Posterior vena cava (tissue), 2 donors: ENCODE measurements at regions of chr17 and their contacts with region 1.

Region 1: DNA sequence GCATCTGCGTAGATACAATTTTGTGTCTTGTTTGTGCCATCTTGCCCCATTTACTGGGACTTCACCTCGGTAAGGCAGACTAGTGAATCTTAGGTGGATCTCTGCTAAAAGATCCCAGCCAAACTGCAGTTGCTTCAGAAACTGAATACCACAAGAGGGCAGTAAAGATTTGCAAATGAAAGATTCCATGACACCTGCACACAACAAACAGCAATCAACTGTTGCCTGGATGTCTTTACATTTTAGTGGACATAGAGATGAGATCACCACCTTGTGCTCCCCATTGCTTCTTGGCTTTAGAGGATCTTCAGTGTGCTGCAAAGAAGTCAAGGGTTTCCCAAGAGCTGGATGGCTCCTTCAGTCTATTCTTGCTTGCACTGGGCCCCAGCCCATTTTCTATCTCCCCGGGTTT is 119.2 kb upstream of the CACNG5 start:
- DNase-seq: no peak

Region 2: GRCh38 chr17:66451188-66452169 is 264.3 kb before region 1 on chr17:
- intact Hi-C with region 1: no loop called
- DNase-seq: no peak

Region 3: DNA sequence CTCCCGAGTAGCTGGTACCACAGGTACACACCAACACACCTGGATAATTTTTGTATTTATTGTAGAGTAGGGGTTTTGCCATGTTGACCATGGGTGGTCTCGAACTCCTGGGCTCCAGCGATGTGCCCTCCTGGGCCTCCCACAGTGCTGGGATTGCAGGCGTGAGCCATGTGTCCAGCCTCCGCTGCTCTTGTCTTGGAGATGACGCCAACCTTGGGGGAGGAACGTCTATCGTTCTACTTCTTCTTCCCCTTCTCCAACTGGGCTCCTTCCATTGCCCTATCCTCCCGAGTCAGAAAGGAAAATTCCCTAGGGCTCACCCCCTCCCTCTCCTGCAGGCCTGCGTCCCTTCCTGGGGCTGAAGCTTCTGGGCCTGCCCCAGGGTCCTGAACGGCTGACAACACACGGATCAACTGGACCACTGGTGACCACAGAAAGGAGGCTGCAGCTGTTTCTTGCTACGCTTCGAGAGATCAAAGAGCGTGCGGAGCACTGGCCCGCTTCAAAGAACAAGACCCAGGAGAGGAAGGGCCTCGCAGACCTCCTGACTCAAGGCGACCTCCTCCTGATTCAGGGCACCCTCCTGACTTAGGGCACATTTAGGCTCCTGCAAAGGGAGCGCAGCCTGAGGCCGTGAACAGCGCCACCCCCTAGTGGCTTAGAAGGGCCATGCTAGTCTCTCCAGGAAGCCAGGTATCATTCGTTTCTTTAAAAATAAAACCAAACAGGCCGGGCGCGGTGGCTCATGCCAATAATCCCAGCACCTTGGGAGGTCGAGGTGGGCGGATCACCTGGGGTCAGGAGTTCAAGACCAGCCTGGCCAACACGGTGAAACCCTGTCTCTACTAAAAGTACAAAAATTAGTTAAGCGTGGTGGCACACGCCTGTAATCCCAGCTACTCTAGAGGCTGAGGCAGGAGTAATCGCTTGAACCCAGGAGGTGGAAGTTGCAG is 577.8 kb after region 1 on chr17:
- intact Hi-C with region 1: loop called in 1 of 2 experiments (anchors 10 kb)
- DNase-seq: peak; percentile 89